IMR-90 (cell line): ENCODE measurements at regions of chr9 and their contacts with region 1.

Region 1: DNA sequence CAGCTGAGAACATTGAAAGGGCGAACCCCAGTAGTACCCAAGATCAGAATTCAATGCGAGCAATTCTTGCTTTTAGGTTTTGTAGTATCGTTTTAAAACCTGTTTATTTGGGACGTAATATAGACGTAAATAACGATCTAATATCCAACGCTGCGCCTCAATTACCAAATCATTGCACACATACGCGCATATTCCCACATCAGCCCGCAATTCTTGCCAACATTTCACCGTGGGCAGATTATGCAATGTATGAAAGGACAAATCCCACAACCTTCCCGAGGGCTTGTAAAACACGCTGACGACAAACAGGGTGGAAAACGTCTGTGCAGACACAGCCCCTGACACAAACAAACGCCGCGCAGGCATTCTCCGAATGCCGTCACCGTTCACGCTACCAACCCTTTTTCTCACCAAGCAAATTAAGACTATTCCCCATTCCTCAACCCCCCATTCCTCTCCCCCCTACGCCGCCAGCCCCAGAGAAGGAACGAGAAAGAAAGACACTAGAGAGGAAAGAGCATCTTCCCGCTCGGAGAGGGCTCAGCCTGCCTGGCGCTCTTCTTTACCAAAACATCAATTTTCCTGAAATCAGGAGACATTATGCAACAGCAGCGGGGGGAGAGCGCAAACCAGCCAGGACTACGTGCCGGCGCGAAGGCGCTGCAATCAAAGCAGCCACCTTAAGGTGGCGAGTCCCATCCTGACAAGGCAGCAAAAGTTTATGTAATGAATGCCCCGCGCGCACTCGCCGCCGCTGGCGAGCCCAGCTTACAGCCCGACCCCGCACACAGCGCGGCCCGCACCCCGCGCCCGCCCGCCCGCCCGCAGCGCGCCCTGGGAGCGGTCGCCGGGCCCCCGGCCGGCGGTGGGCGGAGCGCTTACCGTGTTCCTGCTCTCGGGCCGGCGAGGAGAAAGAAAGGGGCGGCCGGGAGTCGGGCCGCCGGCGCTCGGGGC is 597 bp downstream of the NFIL3 start:
- DNase-seq: peak; percentile 85
- ATAC-seq: peak; percentile 12
- H3K4me3 ChIP-seq: peak overlapping the region; percentile 58
- H3K27ac ChIP-seq: peak overlapping the region; percentile 90
- H3K4me1 ChIP-seq: peaks cover 10% of the 10 kb centered on the region
- H3K27me3 ChIP-seq: no peaks in the 10 kb centered on the region
- CTCF ChIP-seq: 0 out of 2 replicates have a peak, but pooled peaks have one; percentile 21
- POLR2A ChIP-seq: peak; percentile 87
- RAD21 ChIP-seq: peak; percentile 12; the same call in 1 of the 2 replicates

Region 2: DNA sequence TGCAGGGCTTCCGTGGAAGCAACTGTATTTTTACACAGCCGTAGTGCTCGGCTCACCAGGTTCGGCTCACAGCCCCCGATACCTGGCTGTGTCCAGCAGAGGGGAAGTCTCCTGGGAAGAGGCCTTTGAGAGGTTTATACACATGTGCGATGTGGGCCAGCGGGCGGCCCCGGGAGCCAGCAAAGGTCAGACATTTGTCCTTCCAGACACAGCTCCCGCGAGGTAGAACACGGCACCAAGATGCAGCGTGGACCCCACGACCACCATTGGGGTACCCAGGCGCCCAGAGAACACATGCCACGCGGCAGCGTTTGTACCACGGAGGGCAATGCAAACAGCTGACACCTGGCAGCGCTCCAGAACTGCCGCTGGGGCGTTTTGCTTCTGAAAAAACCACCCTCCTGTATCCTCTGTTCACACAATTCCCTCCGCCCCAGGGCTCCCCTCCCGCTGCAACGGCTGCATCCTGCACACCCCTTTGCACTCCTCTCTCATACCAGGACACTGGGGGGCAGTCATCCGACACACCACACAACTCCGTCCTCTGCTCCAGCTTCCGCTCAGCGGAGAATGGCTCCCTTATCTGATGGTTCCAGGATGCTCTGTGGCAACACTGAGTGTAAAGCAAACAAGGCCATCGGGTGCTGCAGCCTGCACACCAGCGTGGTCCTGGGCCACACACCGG is 386.1 kb before region 1 on chr9:
- CTCF ChIA-PET with region 1: no interaction called
- POLR2A ChIA-PET with region 1: no interaction called
- dilution Hi-C with region 1: no loop called
- in situ Hi-C with region 1: no loop called
- intact Hi-C with region 1: loop called (anchors 1 kb)
- DNase-seq: peak; percentile 92
- ATAC-seq: peak; percentile 92
- H3K4me3 ChIP-seq: no peak overlapping the region
- H3K27ac ChIP-seq: peak overlapping the region; percentile 78
- H3K4me1 ChIP-seq: peaks cover 26% of the 10 kb centered on the region
- H3K27me3 ChIP-seq: no peaks in the 10 kb centered on the region
- CTCF ChIP-seq: peak; percentile 82
- POLR2A ChIP-seq: peak; percentile 37; the same call in 1 of the 2 replicates
- RAD21 ChIP-seq: peak; percentile 94

Region 3: DNA sequence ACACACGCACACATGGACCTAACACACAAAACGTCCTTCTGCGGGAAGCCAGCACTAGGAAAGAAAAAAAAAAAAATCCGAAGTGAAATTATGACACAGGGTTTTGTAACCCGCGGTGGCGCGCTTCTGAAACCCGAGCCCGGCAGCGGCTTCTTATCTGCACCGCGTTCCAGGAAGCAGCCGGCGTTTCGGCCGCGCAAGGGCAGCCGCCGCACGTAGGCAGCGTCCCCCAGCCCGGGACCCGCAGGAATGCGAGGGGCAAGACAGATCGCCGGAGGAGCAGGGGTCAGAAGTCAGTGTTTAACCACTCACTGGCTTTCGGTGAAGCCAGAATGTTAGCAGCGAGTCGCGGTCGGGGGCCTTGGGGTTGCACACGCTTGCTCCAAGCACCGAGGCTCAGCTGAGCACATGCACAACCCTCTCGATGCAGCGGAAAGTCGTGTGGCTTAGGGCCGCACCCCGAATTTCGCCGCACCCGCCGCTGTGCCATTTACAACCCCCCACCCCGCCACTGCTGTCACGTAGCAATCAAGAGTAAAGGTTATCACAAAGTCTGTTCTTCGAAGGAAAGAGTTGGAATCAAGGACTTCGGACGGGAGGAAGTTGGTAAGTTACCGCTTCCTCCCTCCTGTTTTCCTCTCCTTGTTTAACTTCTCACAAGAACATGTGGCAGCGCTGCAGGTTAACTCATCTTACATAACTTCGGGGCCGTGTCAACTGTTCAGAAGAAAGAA is 229.2 kb before region 1 on chr9:
- CTCF ChIA-PET with region 1: interaction called, 4 read pairs
- POLR2A ChIA-PET with region 1: no interaction called
- dilution Hi-C with region 1: no loop called
- in situ Hi-C with region 1: no loop called
- intact Hi-C with region 1: loop called (anchors 2 kb)
- DNase-seq: peak; percentile 96
- ATAC-seq: peak; percentile 61
- H3K4me3 ChIP-seq: peak overlapping the region; percentile 15
- H3K27ac ChIP-seq: peak overlapping the region; percentile 94
- H3K4me1 ChIP-seq: peaks cover 37% of the 10 kb centered on the region
- H3K27me3 ChIP-seq: no peaks in the 10 kb centered on the region
- CTCF ChIP-seq: no peak
- POLR2A ChIP-seq: peak; percentile 64
- RAD21 ChIP-seq: peak; percentile 4

Region 4: GRCh38 chr9:91312717-91313344 is 110.2 kb before region 1 on chr9:
- CTCF ChIA-PET with region 1: no interaction called
- POLR2A ChIA-PET with region 1: no interaction called
- dilution Hi-C with region 1: no loop called
- in situ Hi-C with region 1: no loop called
- intact Hi-C with region 1: no loop called
- DNase-seq: no peak
- ATAC-seq: no peak
- H3K4me3 ChIP-seq: no peak overlapping the region
- H3K27ac ChIP-seq: no peak overlapping the region
- H3K4me1 ChIP-seq: peaks cover 2% of the 10 kb centered on the region; the same call in 1 of the 2 replicates
- H3K27me3 ChIP-seq: no peaks in the 10 kb centered on the region
- CTCF ChIP-seq: no peak
- POLR2A ChIP-seq: no peak
- RAD21 ChIP-seq: no peak

Region 5: DNA sequence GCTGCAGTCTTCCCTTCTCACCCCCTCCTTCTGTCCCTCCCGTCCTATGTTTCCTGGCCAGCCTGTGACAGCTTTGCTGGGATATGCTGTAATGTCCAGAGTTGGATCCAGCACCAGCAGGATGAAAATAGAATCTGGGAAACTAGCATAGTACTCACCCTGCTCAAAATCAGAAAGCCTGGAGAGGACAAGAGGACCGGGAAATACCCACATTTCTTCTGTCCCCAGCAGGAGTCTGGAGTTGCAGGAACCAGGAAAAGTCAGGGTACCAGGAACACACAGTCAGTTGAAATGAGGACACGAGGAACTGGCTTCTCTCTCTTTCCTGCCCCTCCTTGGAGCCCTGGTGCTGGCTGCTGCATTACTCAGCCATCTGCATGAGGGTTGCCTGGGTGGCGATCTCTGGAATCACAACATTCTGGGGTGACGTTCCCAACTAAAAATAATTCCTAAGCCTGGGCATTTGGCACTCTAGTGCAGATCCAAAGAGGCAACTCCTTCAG is 60.2 kb after region 1 on chr9:
- CTCF ChIA-PET with region 1: no interaction called
- POLR2A ChIA-PET with region 1: no interaction called
- dilution Hi-C with region 1: no loop called
- in situ Hi-C with region 1: no loop called
- intact Hi-C with region 1: loop called (anchors 5 kb)
- DNase-seq: peak; percentile 47
- ATAC-seq: peak; percentile 52
- H3K4me3 ChIP-seq: no peak overlapping the region
- H3K27ac ChIP-seq: no peak overlapping the region
- H3K4me1 ChIP-seq: peaks cover 10% of the 10 kb centered on the region
- H3K27me3 ChIP-seq: no peaks in the 10 kb centered on the region
- CTCF ChIP-seq: no peak
- POLR2A ChIP-seq: no peak
- RAD21 ChIP-seq: no peak

Region 6: GRCh38 chr9:91681461-91682305 is 258.6 kb after region 1 on chr9:
- CTCF ChIA-PET with region 1: no interaction called
- POLR2A ChIA-PET with region 1: no interaction called
- dilution Hi-C with region 1: no loop called
- in situ Hi-C with region 1: no loop called
- intact Hi-C with region 1: loop called (anchors 1 kb)
- DNase-seq: peak; percentile 64
- ATAC-seq: peak; percentile 89
- H3K4me3 ChIP-seq: no peak overlapping the region
- H3K27ac ChIP-seq: no peak overlapping the region
- H3K4me1 ChIP-seq: peaks cover 11% of the 10 kb centered on the region
- H3K27me3 ChIP-seq: no peaks in the 10 kb centered on the region
- CTCF ChIP-seq: peak; percentile 90
- POLR2A ChIP-seq: no peak
- RAD21 ChIP-seq: peak; percentile 94